ENCODE measurements at regions of chr22 and their contacts with region 1.

Region 1: GRCh38 chr22:28800308-28801077 is at the start of gene XBP1:
- H3K4me3 Mint-ChIP-seq: peak within 1 kb of the TSS; percentile 89
- H3K27ac Mint-ChIP-seq: peak within 1 kb of the TSS; percentile 100
- H3K4me1 Mint-ChIP-seq: peaks cover 47% of the 10 kb centered on the region
- H3K27me3 Mint-ChIP-seq: no peaks in the 10 kb centered on the region

Region 2: GRCh38 chr22:28810821-28811491 is 10.5 kb after region 1 on chr22:
- intact Hi-C with region 1: loop called (anchors 1 kb)
- H3K4me3 Mint-ChIP-seq: peak overlapping the region; percentile 63
- H3K27ac Mint-ChIP-seq: peak overlapping the region; percentile 91
- H3K4me1 Mint-ChIP-seq: peaks cover 69% of the 10 kb centered on the region
- H3K27me3 Mint-ChIP-seq: no peaks in the 10 kb centered on the region

Region 3: GRCh38 chr22:28822930-28823551 is 22.5 kb after region 1 on chr22:
- intact Hi-C with region 1: no loop called
- H3K4me3 Mint-ChIP-seq: no peak overlapping the region
- H3K27ac Mint-ChIP-seq: no peak overlapping the region
- H3K4me1 Mint-ChIP-seq: peaks cover 24% of the 10 kb centered on the region
- H3K27me3 Mint-ChIP-seq: no peaks in the 10 kb centered on the region

Measured in dendritic cell treated with granulocyte-macrophage colony-stimulating factor and Interleukin-4, amounts not matched to agents 40 ng/mL and 50 ng/mL, for 4 days (primary cell).